Activated B cell treated with CpG ODN at 0.5 μM for 24 hours (primary cell): ENCODE measurements at regions of chr1 and their contacts with region 1.

Region 1: DNA sequence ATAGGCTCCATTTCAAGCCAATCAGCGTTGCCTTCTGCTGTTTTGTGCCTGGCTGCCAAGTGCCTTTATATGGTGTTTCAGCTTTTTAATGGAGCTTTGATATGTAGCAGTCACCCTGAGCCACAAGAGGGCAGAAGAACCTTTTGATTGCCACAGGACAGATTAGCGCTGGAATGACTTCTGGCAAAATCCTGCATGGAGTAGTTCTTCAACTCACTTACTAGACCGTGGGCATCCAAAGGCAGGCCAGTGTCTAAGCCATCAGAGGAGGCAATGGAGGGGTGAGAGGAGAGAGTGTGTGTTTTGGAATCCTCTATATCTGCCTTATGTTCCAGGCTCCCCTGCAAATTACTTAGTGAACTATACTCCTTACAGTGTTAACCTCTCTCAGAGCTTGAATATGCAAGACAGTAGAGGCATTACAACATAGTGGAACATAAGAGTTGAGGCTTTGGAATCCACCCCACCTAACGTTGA is 56.2 kb downstream of the ST3GAL3 start:
- DNase-seq: peak; percentile 18
- ATAC-seq: peak; percentile 70
- H3K4me3 Mint-ChIP-seq: no peak overlapping the region
- H3K27ac Mint-ChIP-seq: no peak overlapping the region
- H3K4me1 Mint-ChIP-seq: peaks cover 3% of the 10 kb centered on the region
- H3K27me3 Mint-ChIP-seq: no peaks in the 10 kb centered on the region
- CTCF ChIP-seq: peak; percentile 36

Region 2: GRCh38 chr1:43799656-43800635 is 36.4 kb after region 1 on chr1:
- CTCF ChIA-PET with region 1: no interaction called
- POLR2A ChIA-PET with region 1: no interaction called
- intact Hi-C with region 1: no loop called
- DNase-seq: no peak
- ATAC-seq: no peak
- H3K4me3 Mint-ChIP-seq: no peak overlapping the region
- H3K27ac Mint-ChIP-seq: no peak overlapping the region
- H3K4me1 Mint-ChIP-seq: no peaks in the 10 kb centered on the region
- H3K27me3 Mint-ChIP-seq: no peaks in the 10 kb centered on the region
- CTCF ChIP-seq: no peak

Region 3: GRCh38 chr1:43934101-43934985 is 170.8 kb after region 1 on chr1:
- CTCF ChIA-PET with region 1: interaction called, 123 read pairs
- POLR2A ChIA-PET with region 1: no interaction called
- intact Hi-C with region 1: loop called (anchors 1 kb)
- DNase-seq: peak; percentile 37
- ATAC-seq: peak; percentile 67
- H3K4me3 Mint-ChIP-seq: peak overlapping the region; percentile 62
- H3K27ac Mint-ChIP-seq: no peak overlapping the region
- H3K4me1 Mint-ChIP-seq: peaks cover 19% of the 10 kb centered on the region
- H3K27me3 Mint-ChIP-seq: peaks cover 22% of the 10 kb centered on the region
- CTCF ChIP-seq: no peak

Region 4: DNA sequence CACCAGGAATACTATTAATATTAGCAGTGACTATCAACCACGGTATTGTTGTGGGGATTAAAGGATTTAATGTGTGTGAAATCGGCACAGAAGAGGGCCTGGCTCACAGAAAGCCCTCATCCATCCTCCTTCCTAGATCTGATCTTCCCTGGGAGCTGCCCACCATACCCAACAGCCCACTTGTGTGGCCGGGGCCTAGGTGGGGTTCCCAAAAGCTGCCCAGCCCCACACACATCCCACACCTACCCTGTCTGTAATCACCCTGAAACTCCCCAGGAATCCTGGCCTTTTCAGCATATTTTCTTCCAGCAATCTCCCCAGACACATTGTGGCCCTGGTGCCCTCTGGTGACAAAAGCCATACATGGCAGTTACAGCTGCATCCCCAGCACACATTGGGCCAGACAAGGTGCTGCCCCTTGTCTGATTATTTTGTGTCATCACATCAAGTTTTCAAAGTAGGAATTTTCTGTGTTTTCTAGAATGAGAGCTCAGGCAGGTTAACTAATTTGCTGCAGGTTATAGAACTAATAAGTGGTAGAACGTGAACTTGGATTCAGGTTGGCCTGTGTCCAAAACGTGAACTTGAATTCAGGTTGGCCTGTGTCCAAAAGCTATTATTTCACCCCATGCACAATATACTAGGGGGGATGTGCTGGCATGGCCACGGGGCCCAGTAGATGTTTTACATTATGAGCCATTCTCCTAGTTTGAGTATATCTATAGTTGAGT is 273.0 kb after region 1 on chr1:
- CTCF ChIA-PET with region 1: interaction called, 34 read pairs
- POLR2A ChIA-PET with region 1: no interaction called
- intact Hi-C with region 1: loop called (anchors 1 kb)
- DNase-seq: peak; percentile 50
- ATAC-seq: peak; percentile 92
- H3K4me3 Mint-ChIP-seq: no peak overlapping the region
- H3K27ac Mint-ChIP-seq: no peak overlapping the region
- H3K4me1 Mint-ChIP-seq: peaks cover 6% of the 10 kb centered on the region
- H3K27me3 Mint-ChIP-seq: no peaks in the 10 kb centered on the region
- CTCF ChIP-seq: no peak